ENCODE measurements at regions of chr2 and their contacts with region 1.

Region 1: GRCh38 chr2:178414266-178415247 is 36.4 kb downstream of the PRKRA start:
- DNase-seq: peak; percentile 81 to 90 (median 84)
- H3K4me3 ChIP-seq: peak overlapping the region; percentile 50
- H3K27ac ChIP-seq: peak overlapping the region; percentile 81 to 97
- H3K4me1 ChIP-seq: no peaks in the 10 kb centered on the region
- H3K27me3 ChIP-seq: no peaks in the 10 kb centered on the region
- CTCF ChIP-seq: peak; percentile 76 to 86 (median 79)
- EP300 ChIP-seq: no peak
- POLR2A ChIP-seq: no peak

Region 2: DNA sequence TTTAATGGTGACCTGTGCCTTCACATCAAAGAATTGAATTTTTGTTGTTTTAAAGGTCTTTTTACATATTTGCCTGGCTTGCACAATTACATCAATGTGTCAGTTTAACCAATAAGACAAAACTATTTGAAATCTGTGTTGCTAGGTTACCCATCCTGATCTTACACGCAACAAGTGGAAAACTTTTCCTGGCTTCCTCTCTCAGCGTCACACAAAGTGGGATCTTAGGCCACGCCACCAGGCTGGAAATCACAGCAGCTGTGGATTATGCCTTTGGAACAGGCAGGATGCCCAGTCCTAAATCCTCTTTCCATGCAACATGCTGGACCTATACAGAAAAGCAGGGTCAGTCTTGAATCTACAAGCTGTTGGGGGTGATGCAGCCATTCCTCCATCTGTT is 1500.2 kb before region 1 on chr2:
- intact Hi-C with region 1: no loop called
- DNase-seq: no peak
- H3K4me3 ChIP-seq: no peak overlapping the region
- H3K27ac ChIP-seq: no peak overlapping the region
- H3K4me1 ChIP-seq: no peaks in the 10 kb centered on the region
- H3K27me3 ChIP-seq: no peaks in the 10 kb centered on the region
- CTCF ChIP-seq: no peak
- EP300 ChIP-seq: no peak
- POLR2A ChIP-seq: no peak

Region 3: GRCh38 chr2:178112202-178113152 is 302.1 kb before region 1 on chr2 and contains the start of gene RBM45:
- intact Hi-C with region 1: loop called in 2 of 4 experiments (anchors 10 kb)
- DNase-seq: peak; percentile 84 to 94 (median 90)
- H3K4me3 ChIP-seq: peak within 1 kb of the TSS; percentile 65
- H3K27ac ChIP-seq: peak within 1 kb of the TSS in 1 of 2 donors; percentile 60
- H3K4me1 ChIP-seq: peaks cover 2% of the 10 kb centered on the region
- H3K27me3 ChIP-seq: no peaks in the 10 kb centered on the region
- CTCF ChIP-seq: peak; percentile 83 to 99 (median 87)
- EP300 ChIP-seq: no peak
- POLR2A ChIP-seq: no peak
- total RNA-seq, gene RBM45: 6.8 to 15.0 (median 11.8) TPM

Region 4: DNA sequence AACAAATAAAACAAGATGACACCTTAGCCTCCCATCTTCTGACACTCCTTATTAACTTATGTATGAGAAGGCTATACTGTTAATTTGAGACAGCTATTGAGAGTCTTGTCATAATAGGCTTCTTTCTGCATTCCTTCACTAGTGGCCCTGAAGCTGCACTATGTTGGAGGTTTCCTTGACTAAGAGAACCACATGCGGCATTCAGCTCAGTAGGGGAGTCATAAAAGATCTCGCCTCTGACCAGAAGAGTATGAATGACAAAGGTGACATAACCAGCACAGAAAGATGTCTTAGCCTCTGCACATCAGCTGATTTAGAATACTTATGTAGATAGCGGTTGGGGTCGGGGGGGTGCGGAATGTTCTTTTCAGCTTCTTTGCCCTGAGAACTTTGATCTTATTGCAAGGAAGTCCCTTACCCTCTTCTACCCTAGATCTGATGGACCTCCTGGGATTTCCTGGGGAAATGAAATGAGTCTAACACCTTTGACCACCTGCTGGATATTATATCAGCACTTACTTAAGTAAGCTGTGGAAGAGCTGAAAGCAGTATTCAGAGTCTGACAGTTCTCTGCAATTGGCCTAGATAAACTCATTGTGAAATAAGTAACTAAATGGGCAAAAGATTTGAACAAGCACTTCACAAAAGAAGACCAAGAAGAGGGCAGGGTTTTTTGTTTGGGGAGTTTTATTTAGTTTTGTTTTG is 278.1 kb before region 1 on chr2:
- intact Hi-C with region 1: loop called in 1 of 4 experiments (anchors 10 kb)
- DNase-seq: no peak
- H3K4me3 ChIP-seq: no peak overlapping the region
- H3K27ac ChIP-seq: no peak overlapping the region
- H3K4me1 ChIP-seq: no peaks in the 10 kb centered on the region
- H3K27me3 ChIP-seq: no peaks in the 10 kb centered on the region
- CTCF ChIP-seq: no peak
- EP300 ChIP-seq: no peak
- POLR2A ChIP-seq: no peak